A549 (cell line): ENCODE measurements at regions of chr5 and their contacts with region 1.

Region 1: DNA sequence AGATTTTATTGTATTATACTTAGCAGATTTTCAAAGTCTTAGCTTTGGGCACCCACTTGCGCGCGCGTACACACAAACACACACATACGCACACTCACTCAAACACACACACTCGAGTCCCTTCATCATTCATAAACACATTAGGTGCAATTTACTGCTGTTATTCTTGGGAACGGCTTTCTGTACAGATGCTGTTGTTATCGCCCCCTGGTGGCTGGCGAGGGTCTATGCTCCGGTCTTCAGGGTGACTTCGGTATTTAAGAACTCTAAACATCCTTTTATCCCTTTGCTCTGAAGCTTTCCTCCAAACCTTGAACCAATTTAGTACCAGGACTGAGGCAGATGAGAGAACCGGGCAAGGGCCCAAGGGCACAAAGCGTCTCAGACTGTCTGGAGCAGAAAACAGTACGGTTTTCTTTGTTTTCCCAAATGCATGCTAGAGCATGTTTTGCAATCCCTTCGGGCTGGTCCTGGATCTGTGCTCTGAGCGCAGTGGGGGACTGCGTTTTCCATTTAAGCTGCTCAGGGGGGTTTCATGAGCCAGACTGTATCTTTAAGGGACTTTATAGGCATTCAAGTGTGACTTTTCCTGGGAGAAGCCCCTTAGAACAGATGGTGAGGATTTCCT is 1.7 kb upstream of the SLIT3 start:
- DNase-seq: peak; percentile 81 to 88
- ATAC-seq: peak in 1 of 2 experiments; percentile 54; a peak in 3 of 6 replicates
- H3K4me3 ChIP-seq: no peak overlapping the region
- H3K27ac ChIP-seq: peak overlapping the region; percentile 14 to 99; a peak in 4 of 6 replicates
- H3K4me1 ChIP-seq: peaks cover 38% of the 10 kb centered on the region
- CTCF ChIP-seq: peak; percentile 90
- EP300 ChIP-seq: no peak
- POLR2A ChIP-seq: no peak
- RAD21 ChIP-seq: peak; percentile 79 to 81

Region 2: DNA sequence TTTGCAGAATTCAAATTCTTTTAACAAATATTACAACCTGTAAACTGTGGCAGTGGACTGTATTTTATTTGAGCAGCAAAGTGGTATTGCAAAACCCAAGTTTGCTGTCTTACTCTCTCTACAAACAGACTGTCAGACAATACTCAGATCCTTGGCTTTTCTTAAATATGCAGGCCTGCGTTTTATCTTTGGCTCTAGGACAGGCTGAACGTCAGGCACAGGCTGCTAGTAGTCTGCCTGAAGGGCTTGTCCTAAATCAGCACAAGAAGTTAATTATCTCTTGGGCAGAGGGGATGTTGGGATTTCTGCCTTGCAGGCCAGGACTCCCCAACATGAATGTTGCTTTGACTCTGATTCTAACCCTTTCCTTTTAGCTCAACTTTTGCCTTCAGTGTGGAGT is 149.2 kb before region 1 on chr5:
- CTCF ChIA-PET with region 1: interaction called, 19 read pairs
- POLR2A ChIA-PET with region 1: no interaction called
- DNase-seq: no peak
- ATAC-seq: peak in 1 of 2 experiments; percentile 61; a peak in 3 of 6 replicates
- H3K4me3 ChIP-seq: no peak overlapping the region
- H3K27ac ChIP-seq: peak overlapping the region; percentile 35 to 66; a peak in 4 of 6 replicates
- H3K4me1 ChIP-seq: peaks cover 40% of the 10 kb centered on the region
- CTCF ChIP-seq: no peak
- EP300 ChIP-seq: no peak
- POLR2A ChIP-seq: no peak
- RAD21 ChIP-seq: no peak

Region 3: GRCh38 chr5:169286572-169287300 is 15.9 kb before region 1 on chr5:
- CTCF ChIA-PET with region 1: interaction called, 23 read pairs
- POLR2A ChIA-PET with region 1: interaction called, 4 read pairs
- DNase-seq: no peak
- ATAC-seq: no peak
- H3K4me3 ChIP-seq: no peak overlapping the region
- H3K27ac ChIP-seq: no peak overlapping the region
- H3K4me1 ChIP-seq: peaks cover 10% of the 10 kb centered on the region; the same call in 1 of the 3 replicates
- CTCF ChIP-seq: no peak
- EP300 ChIP-seq: no peak
- POLR2A ChIP-seq: no peak
- RAD21 ChIP-seq: no peak

Region 4: GRCh38 chr5:169325273-169325672 is 22.7 kb after region 1 on chr5:
- CTCF ChIA-PET with region 1: interaction called, 11 read pairs
- POLR2A ChIA-PET with region 1: no interaction called
- DNase-seq: no peak
- ATAC-seq: no peak
- H3K4me3 ChIP-seq: no peak overlapping the region
- H3K27ac ChIP-seq: no peak overlapping the region
- H3K4me1 ChIP-seq: no peaks in the 10 kb centered on the region
- CTCF ChIP-seq: no peak
- EP300 ChIP-seq: no peak
- POLR2A ChIP-seq: no peak
- RAD21 ChIP-seq: no peak

Region 5: DNA sequence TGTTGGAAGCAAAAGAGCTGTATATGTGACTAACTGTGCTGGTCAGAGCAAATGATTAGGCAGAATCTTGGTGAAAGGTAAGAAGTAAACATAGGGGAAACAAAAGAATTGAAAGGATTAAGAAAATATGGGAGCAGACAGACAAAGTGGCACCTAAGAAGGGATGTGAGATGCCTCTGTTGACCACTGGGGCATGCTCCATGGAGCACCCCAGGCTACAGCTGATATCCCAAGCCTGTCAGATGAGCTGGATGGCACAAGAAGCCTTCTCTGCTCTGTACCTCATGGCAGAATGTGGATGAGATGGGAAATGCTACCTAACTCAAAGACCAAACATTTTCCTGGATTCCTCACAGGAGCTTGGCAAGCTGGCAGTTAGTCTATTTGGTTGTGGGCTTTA is 87.7 kb after region 1 on chr5:
- CTCF ChIA-PET with region 1: no interaction called
- POLR2A ChIA-PET with region 1: no interaction called
- DNase-seq: peak; percentile 10 to 13
- ATAC-seq: peak; percentile 83 to 84
- H3K4me3 ChIP-seq: no peak overlapping the region
- H3K27ac ChIP-seq: no peak overlapping the region
- H3K4me1 ChIP-seq: no peaks in the 10 kb centered on the region
- CTCF ChIP-seq: no peak
- EP300 ChIP-seq: no peak
- POLR2A ChIP-seq: no peak
- RAD21 ChIP-seq: no peak

Region 6: GRCh38 chr5:169416583-169417196 is 114.1 kb after region 1 on chr5:
- CTCF ChIA-PET with region 1: no interaction called
- POLR2A ChIA-PET with region 1: no interaction called
- DNase-seq: no peak
- ATAC-seq: no peak
- H3K4me3 ChIP-seq: no peak overlapping the region
- H3K27ac ChIP-seq: no peak overlapping the region
- H3K4me1 ChIP-seq: peaks cover 12% of the 10 kb centered on the region
- CTCF ChIP-seq: no peak
- EP300 ChIP-seq: no peak
- POLR2A ChIP-seq: no peak
- RAD21 ChIP-seq: no peak

Region 7: GRCh38 chr5:169548315-169548714 is 245.7 kb after region 1 on chr5:
- CTCF ChIA-PET with region 1: interaction called, 15 read pairs
- POLR2A ChIA-PET with region 1: no interaction called
- DNase-seq: peak; percentile 48 to 68
- ATAC-seq: peak; percentile 95 to 99
- H3K4me3 ChIP-seq: no peak overlapping the region
- H3K27ac ChIP-seq: peak overlapping the region; percentile 11 to 63; a peak in 2 of 6 replicates
- H3K4me1 ChIP-seq: peaks cover 32% of the 10 kb centered on the region
- CTCF ChIP-seq: peak; percentile 92
- EP300 ChIP-seq: no peak
- POLR2A ChIP-seq: no peak
- RAD21 ChIP-seq: peak; percentile 97 to 99